Tibial artery (tissue), 4 donors: ENCODE measurements at regions of chr2 and their contacts with region 1.

Region 1: DNA sequence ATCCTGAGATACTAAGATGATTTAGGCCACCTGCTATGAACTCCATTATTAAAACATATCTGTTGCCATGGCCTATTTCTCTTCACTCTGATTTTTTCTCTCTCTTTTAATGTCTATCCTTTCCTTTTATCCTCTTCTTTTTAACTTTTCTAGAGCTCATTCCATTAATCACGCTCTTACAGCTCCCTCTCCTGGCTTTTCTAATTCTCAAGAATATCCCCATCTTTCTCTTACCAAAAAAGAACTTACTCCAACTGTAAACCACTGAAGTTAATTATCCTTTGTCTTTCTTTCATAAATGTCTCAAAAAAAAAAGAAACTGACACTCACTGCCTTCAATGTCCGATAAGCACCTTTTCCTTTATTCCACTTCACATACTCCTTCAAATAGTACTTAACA is 7.9 kb downstream of the PPP3R1 start:
- DNase-seq: no peak
- H3K4me3 ChIP-seq: no peak overlapping the region
- H3K27ac ChIP-seq: no peak overlapping the region
- H3K4me1 ChIP-seq: peaks cover 0 to 90% (median 38%) of the 10 kb centered on the region in 4 donors
- H3K27me3 ChIP-seq: no peaks in the 10 kb centered on the region
- CTCF ChIP-seq: peak in 1 of 2 experiments; percentile 33

Region 2: DNA sequence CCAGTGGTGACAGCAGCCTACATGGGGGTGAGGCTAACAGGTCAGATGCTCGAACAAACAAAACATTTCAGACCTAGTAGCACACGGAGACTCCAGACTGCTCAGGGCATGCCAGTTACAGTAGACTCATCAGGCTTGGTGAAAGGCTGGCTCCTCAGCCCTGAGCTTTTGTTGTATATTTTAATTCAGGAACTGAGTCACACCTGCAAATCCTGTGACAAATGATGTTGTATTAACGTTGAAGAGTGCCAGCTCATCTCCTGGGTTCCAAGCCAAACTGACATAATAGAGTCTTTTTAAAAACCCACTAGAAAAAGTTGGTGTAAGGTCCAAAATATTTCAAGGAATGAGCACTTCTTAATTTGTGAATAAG is 246.9 kb before region 1 on chr2:
- intact Hi-C with region 1: no loop called
- DNase-seq: no peak
- H3K4me3 ChIP-seq: no peak overlapping the region
- H3K27ac ChIP-seq: no peak overlapping the region
- H3K4me1 ChIP-seq: no peaks in the 10 kb centered on the region
- H3K27me3 ChIP-seq: no peaks in the 10 kb centered on the region
- CTCF ChIP-seq: no peak

Region 3: DNA sequence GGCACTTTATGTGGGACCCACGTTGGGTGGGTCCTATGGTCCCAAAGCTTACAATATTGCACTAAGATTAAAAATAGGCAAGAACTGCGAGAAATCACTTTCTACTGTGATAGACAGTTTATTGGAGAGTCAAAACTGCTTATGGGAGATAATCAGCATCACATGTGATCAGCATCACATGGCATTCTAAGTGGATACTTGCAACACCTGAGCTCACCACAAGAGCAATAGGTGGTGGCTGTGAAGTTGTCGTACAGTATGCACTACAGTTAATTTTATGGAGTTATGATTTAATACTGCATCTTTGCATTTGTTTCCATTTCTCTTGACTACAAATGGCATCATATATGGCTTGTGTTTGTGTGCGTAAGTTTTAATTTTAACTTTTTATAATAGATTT is 75.2 kb before region 1 on chr2:
- intact Hi-C with region 1: loop called (anchors 2 kb)
- DNase-seq: no peak
- H3K4me3 ChIP-seq: no peak overlapping the region
- H3K27ac ChIP-seq: no peak overlapping the region
- H3K4me1 ChIP-seq: no peaks in the 10 kb centered on the region
- H3K27me3 ChIP-seq: no peaks in the 10 kb centered on the region
- CTCF ChIP-seq: no peak

Region 4: GRCh38 chr2:68196120-68196716 is 48.2 kb before region 1 on chr2:
- intact Hi-C with region 1: loop called (anchors 5 kb)
- DNase-seq: peak in 1 of 2 donors; percentile 29
- H3K4me3 ChIP-seq: no peak overlapping the region
- H3K27ac ChIP-seq: no peak overlapping the region
- H3K4me1 ChIP-seq: peaks cover 0 to 46% (median 13%) of the 10 kb centered on the region in 4 donors
- H3K27me3 ChIP-seq: no peaks in the 10 kb centered on the region
- CTCF ChIP-seq: peak; percentile 62 to 63

Region 5: DNA sequence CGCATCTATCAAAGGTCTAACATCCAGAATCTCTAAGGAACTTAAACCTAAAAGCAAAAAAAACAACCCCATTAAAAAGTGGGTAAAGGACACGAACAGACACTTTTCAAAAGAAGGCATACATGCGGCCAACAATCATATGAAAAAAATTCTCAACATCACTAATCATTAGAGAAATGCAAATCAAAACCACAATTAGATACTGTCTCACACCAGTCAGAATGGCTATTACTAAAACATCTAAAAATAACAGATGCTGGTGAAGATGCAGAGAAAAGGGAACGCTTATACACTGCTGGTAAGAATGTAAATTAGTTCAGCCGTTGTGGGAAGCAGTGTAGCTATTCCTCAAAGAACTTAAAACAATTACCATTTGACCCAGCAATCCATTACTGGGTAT is 30.1 kb before region 1 on chr2:
- intact Hi-C with region 1: no loop called
- DNase-seq: no peak
- H3K4me3 ChIP-seq: no peak overlapping the region
- H3K27ac ChIP-seq: no peak overlapping the region
- H3K4me1 ChIP-seq: peaks cover 0 to 36% (median 13%) of the 10 kb centered on the region in 4 donors
- H3K27me3 ChIP-seq: no peaks in the 10 kb centered on the region
- CTCF ChIP-seq: no peak